ENCODE measurements at regions of chr9 and their contacts with region 1.

Region 1: DNA sequence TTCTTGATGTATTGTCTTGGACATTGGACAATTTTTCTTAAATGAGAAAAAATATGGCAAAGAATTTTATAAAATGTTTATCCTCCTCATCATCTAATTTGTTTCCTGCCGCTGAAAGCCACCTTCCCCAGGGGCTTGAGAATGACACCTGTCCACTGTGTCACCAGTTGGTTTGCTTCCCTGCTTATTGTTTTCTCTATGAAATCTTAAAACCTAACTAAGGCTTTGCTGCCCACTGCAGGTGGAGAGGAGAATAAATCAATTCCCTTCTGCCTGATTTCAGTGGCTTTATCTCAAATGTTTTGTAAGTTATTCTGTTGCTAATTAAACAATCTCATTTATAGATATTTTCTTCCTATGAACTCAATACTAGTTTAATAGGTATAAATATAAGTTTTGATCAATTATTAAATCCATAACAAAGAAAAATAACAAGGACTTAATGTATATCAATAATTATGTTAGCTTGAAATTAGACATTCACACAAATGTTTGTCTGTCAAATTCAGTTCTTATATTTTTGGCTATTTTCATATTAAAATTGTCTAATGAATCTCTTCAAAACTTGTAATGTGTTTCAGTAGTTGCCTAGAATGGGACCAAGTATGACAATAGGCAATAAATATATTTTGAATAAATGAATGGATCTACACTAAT is 822.5 kb downstream of the PTPRD start:
- DNase-seq: peak; percentile 69
- H3K4me3 ChIP-seq: no peak overlapping the region
- H3K27ac ChIP-seq: no peak overlapping the region
- H3K4me1 ChIP-seq: no peaks in the 10 kb centered on the region
- H3K27me3 ChIP-seq: peaks cover 0 to 2% of the 10 kb centered on the region in 2 experiments
- CTCF ChIP-seq: peak; percentile 63 to 76
- POLR2A ChIP-seq: no peak

Region 2: DNA sequence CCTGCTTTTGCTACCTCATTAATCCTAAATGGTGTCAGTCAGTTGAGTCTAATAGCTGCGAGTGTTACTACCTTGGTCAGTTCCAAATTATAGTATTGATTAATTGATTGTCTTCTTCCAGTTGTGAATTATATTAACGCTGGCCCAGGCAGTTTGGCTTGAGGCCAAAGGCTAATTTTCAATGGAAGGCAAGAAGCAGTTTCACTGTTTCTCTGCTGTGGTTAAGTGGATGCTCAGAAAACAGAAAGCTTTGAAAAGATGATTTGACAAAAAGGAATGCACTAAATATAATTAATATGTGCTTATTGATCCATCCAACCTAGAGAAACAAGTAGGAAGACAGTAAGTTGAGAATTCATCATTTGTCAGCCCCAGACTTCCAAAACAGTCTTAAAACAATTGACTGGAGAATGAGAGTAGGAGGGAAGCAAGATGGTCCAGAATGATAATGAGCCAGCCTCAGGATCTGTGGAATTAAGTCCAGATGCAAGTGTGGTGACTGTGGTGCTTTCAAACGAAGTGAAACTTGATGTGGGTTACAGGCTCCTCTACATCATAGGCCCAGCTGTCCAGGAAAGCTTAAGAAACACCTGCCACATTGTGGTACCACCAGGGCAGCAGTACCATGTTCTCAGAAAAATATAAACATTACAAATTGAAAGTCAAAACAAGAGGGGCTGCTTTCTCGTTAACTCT is 619.8 kb before region 1 on chr9:
- CTCF ChIA-PET with region 1: no interaction called
- POLR2A ChIA-PET with region 1: no interaction called
- dilution Hi-C with region 1: no loop called
- intact Hi-C with region 1: loop called (anchors 5 kb)
- DNase-seq: no peak
- H3K4me3 ChIP-seq: no peak overlapping the region
- H3K27ac ChIP-seq: no peak overlapping the region
- H3K4me1 ChIP-seq: no peaks in the 10 kb centered on the region
- H3K27me3 ChIP-seq: no peaks in the 10 kb centered on the region
- CTCF ChIP-seq: no peak
- POLR2A ChIP-seq: no peak

Region 3: GRCh38 chr9:9605681-9606080 is 184.7 kb before region 1 on chr9:
- CTCF ChIA-PET with region 1: interaction called, 806 read pairs
- POLR2A ChIA-PET with region 1: interaction called, 11 read pairs
- dilution Hi-C with region 1: no loop called
- intact Hi-C with region 1: loop called (anchors 1 kb)
- DNase-seq: no peak
- H3K4me3 ChIP-seq: no peak overlapping the region
- H3K27ac ChIP-seq: no peak overlapping the region
- H3K4me1 ChIP-seq: no peaks in the 10 kb centered on the region
- H3K27me3 ChIP-seq: peaks cover 0 to 2% of the 10 kb centered on the region in 2 experiments
- CTCF ChIP-seq: no peak
- POLR2A ChIP-seq: no peak

Region 4: GRCh38 chr9:9645006-9645405 is 145.3 kb before region 1 on chr9:
- CTCF ChIA-PET with region 1: interaction called, 7 read pairs
- POLR2A ChIA-PET with region 1: no interaction called
- dilution Hi-C with region 1: no loop called
- intact Hi-C with region 1: loop called (anchors 5 kb)
- DNase-seq: no peak
- H3K4me3 ChIP-seq: no peak overlapping the region
- H3K27ac ChIP-seq: no peak overlapping the region
- H3K4me1 ChIP-seq: peaks cover 16% of the 10 kb centered on the region
- H3K27me3 ChIP-seq: no peaks in the 10 kb centered on the region
- CTCF ChIP-seq: no peak
- POLR2A ChIP-seq: no peak

Region 5: DNA sequence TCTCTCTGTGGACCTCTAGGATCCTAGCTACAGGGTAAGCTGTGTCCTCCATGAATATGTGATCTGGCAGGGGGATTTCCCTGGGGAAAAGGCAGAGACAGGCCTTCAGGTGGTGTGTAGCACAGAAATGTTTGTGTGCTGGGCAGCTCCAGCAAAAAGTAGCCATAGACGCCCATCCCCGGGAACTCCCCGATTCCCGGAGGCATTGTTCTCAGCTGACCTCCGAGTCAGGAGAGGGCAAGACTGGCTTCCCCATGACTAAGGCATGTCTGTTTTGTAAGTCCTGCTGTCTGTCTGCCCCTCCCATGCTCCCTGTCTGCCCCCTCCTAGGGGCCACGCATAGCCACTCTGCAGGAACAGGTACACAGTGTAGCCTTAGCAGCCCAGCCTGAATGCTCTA is 12.1 kb before region 1 on chr9:
- CTCF ChIA-PET with region 1: interaction called, 20 read pairs
- POLR2A ChIA-PET with region 1: no interaction called
- dilution Hi-C with region 1: no loop called
- intact Hi-C with region 1: no loop called
- DNase-seq: peak; percentile 24
- H3K4me3 ChIP-seq: no peak overlapping the region
- H3K27ac ChIP-seq: peak overlapping the region; percentile 43
- H3K4me1 ChIP-seq: peaks cover 37% of the 10 kb centered on the region
- H3K27me3 ChIP-seq: no peaks in the 10 kb centered on the region
- CTCF ChIP-seq: no peak
- POLR2A ChIP-seq: no peak

Region 6: GRCh38 chr9:10032166-10032565 is 241.8 kb after region 1 on chr9:
- CTCF ChIA-PET with region 1: no interaction called
- POLR2A ChIA-PET with region 1: no interaction called
- dilution Hi-C with region 1: no loop called
- intact Hi-C with region 1: no loop called
- DNase-seq: no peak
- H3K4me3 ChIP-seq: no peak overlapping the region
- H3K27ac ChIP-seq: no peak overlapping the region
- H3K4me1 ChIP-seq: no peaks in the 10 kb centered on the region
- H3K27me3 ChIP-seq: no peaks in the 10 kb centered on the region
- CTCF ChIP-seq: no peak
- POLR2A ChIP-seq: no peak